ENCODE measurements at regions of chr5 and their contacts with region 1.

Region 1: GRCh38 chr5:75566710-75567309 is 44.4 kb upstream of the ANKDD1B start:
- DNase-seq: peak; percentile 86
- ATAC-seq: peak; percentile 88
- H3K4me3 ChIP-seq: peak overlapping the region in 1 of 2 experiments; percentile 7; a peak in 1 of 4 replicates
- H3K27ac ChIP-seq: peak overlapping the region; percentile 93
- H3K4me1 ChIP-seq: peaks cover 26% of the 10 kb centered on the region
- H3K27me3 ChIP-seq: no peaks in the 10 kb centered on the region
- CTCF ChIP-seq: no peak

Region 2: DNA sequence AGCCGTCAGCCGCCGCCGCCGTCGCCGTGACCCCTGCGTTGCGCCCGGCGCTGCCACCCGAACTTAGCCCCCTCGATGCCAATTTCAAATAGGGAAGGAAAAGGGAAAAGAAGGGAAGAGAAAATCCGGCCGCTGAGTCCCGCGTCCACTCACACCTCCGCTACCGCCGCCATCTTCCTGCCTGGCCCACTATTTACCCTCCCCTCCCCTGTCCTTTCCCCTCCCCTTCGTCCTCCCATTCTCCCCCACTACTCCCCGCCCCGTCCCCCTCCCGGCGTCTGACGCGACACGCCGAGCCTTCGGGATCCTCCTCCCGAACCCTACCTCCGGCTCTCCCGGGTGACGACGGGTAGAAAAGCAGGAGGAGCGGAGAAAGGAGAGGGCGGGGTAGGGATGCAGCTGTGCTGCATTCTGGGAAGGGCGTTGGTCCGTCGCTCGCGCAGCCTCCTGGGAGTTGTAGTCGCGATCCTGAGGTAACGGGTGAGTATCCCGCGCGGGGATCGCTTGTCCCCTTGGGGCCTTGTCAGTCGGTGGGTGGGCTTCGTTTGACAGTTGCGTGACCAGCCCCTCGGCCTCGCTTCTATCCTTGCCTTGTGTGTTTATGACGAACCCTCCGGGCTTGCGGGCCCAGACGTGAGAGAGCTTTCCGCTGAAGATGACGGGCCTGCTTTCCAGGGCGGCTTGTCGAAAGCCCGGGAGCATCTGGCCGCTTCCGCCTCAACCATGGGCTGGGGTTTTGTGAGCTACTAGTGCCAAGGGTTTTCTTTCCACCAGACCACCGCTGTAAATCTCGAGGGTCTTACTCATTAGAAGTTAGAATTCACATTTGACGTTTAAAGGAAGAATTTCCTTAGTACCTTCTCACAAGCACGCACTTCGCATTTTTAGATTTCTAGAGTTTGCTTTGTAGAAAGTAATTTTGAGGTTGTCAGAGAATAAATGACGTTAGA is 55.1 kb before region 1 on chr5 and contains the starts of genes CERT1 and POLK:
- CTCF ChIA-PET with region 1: no interaction called
- POLR2A ChIA-PET with region 1: no interaction called
- in situ Hi-C with region 1: no loop called
- intact Hi-C with region 1: loop called (anchors 5 kb)
- DNase-seq: peak; percentile 97
- ATAC-seq: peak; percentile 99
- H3K4me3 ChIP-seq: peak within 1 kb of the TSS; percentile 87 to 98
- H3K27ac ChIP-seq: peak within 1 kb of the TSS; percentile 98
- H3K4me1 ChIP-seq: peaks cover 9% of the 10 kb centered on the region
- H3K27me3 ChIP-seq: no peaks in the 10 kb centered on the region
- CTCF ChIP-seq: no peak
- total RNA-seq, gene CERT1: 26.7 TPM
- total RNA-seq, gene POLK: 21.3 TPM